H1 (cell line): ENCODE measurements at regions of chr6 and their contacts with region 1.

Region 1: GRCh38 chr6:63802606-63803206 is 167.1 kb downstream of the PHF3 start:
- DNase-seq: no peak
- H3K4me3 ChIP-seq: no peak overlapping the region
- H3K27ac ChIP-seq: no peak overlapping the region
- H3K4me1 ChIP-seq: peaks cover 0 to 3% (median 0%) of the 10 kb centered on the region in 4 experiments; a peak in 1 of 7 replicates
- H3K27me3 ChIP-seq: no peaks in the 10 kb centered on the region
- CTCF ChIP-seq: peak in 2 of 3 experiments; percentile 25 to 46; a peak in 2 of 4 replicates
- EP300 ChIP-seq: no peak
- POLR2A ChIP-seq: no peak
- RAD21 ChIP-seq: peak; percentile 70 to 77

Region 2: GRCh38 chr6:63487138-63487813 is 315.4 kb before region 1 on chr6:
- CTCF ChIA-PET with region 1: no interaction called
- POLR2A ChIA-PET with region 1: no interaction called
- DNase-seq: no peak
- H3K4me3 ChIP-seq: no peak overlapping the region
- H3K27ac ChIP-seq: no peak overlapping the region
- H3K4me1 ChIP-seq: no peaks in the 10 kb centered on the region
- H3K27me3 ChIP-seq: no peaks in the 10 kb centered on the region
- CTCF ChIP-seq: no peak
- EP300 ChIP-seq: no peak
- POLR2A ChIP-seq: no peak
- RAD21 ChIP-seq: no peak

Region 3: DNA sequence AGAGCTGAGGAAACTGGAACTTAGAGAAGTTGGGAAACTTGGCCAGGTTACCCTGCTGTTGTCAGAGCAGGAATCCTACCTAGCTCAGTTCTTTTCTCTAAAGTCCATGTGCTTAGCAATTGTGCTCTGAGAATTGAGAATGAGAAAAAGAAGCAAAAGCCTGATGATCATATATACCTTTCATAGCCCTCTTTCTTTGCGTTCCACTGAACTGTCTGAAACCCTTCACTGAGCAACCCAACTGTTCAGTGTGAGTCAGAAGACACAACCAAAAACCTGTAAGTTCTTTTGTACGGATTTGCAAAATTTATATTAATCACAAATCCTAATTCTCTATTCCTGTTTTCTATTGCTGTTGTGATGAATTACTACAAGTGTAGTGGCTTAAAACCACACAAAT is 86.5 kb before region 1 on chr6:
- CTCF ChIA-PET with region 1: interaction called, 10 read pairs
- POLR2A ChIA-PET with region 1: no interaction called
- DNase-seq: no peak
- H3K4me3 ChIP-seq: no peak overlapping the region
- H3K27ac ChIP-seq: no peak overlapping the region
- H3K4me1 ChIP-seq: no peaks in the 10 kb centered on the region
- H3K27me3 ChIP-seq: no peaks in the 10 kb centered on the region
- CTCF ChIP-seq: no peak
- EP300 ChIP-seq: no peak
- POLR2A ChIP-seq: no peak
- RAD21 ChIP-seq: no peak

Region 4: DNA sequence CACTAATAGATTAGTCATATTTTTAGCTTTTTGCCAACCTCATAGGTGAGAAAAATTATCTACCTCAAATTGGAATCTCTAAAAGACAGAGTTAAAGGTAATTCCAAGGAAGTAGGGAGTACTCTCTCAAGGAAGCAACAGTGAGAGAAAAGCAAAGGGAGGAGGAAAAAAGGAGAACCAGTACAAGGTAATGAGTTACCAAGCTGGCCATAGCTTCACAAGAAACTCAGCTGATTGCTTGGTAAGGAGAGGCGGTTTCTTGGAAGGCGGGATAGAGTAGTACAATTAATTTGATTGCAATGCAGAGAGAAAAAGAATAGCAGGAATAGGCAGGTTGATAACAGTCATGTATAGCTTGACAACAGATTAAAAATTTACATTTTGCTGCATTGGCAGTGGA is 29.5 kb before region 1 on chr6:
- CTCF ChIA-PET with region 1: interaction called, 10 read pairs
- POLR2A ChIA-PET with region 1: no interaction called
- DNase-seq: no peak
- H3K4me3 ChIP-seq: no peak overlapping the region
- H3K27ac ChIP-seq: no peak overlapping the region
- H3K4me1 ChIP-seq: no peaks in the 10 kb centered on the region
- H3K27me3 ChIP-seq: no peaks in the 10 kb centered on the region
- CTCF ChIP-seq: no peak
- EP300 ChIP-seq: no peak
- POLR2A ChIP-seq: no peak
- RAD21 ChIP-seq: no peak

Region 5: DNA sequence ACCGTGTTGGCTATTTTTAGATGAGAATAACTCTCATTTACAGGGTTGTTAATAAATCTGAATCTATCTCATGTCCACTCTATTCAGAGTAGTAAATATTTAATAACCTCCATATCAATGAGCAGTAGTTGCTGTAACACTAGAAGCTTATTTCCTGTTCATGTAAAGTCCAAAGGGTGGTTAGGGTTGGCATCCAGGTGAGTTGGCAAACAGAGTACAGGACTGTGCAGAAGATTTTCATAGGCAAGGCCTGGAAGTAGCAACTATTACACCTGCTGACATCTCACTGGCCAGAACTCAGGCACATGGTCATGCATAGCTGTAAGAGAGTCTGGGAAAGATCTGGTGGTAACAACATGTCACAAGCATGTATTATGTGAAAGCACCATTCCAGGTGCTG is 19.6 kb before region 1 on chr6:
- CTCF ChIA-PET with region 1: interaction called, 13 read pairs
- POLR2A ChIA-PET with region 1: no interaction called
- DNase-seq: no peak
- H3K4me3 ChIP-seq: no peak overlapping the region
- H3K27ac ChIP-seq: no peak overlapping the region
- H3K4me1 ChIP-seq: peaks cover 0 to 3% (median 0%) of the 10 kb centered on the region in 4 experiments; a peak in 1 of 7 replicates
- H3K27me3 ChIP-seq: no peaks in the 10 kb centered on the region
- CTCF ChIP-seq: no peak
- EP300 ChIP-seq: no peak
- POLR2A ChIP-seq: no peak
- RAD21 ChIP-seq: no peak